Activated B cell treated with CpG ODN at 0.5 μM for 24 hours (primary cell): ENCODE measurements at regions of chr3 and their contacts with region 1.

Region 1: GRCh38 chr3:52705688-52706686 is at the starts of genes GLT8D1 and SPCS1:
- DNase-seq: peak; percentile 87
- ATAC-seq: peak; percentile 87
- H3K4me3 Mint-ChIP-seq: peak within 1 kb of the TSS; percentile 94
- H3K27ac Mint-ChIP-seq: peak within 1 kb of the TSS; percentile 92
- H3K4me1 Mint-ChIP-seq: peaks cover 48% of the 10 kb centered on the region
- H3K27me3 Mint-ChIP-seq: no peaks in the 10 kb centered on the region
- CTCF ChIP-seq: no peak
- total RNA-seq, gene GLT8D1: 20.4 and 22.2 TPM in 2 replicates
- total RNA-seq, gene SPCS1: 78.0 and 79.4 TPM in 2 replicates

Region 2: GRCh38 chr3:52663098-52663497 is 42.9 kb before region 1 on chr3:
- CTCF ChIA-PET with region 1: no interaction called
- POLR2A ChIA-PET with region 1: no interaction called
- intact Hi-C with region 1: no loop called
- DNase-seq: no peak
- ATAC-seq: no peak
- H3K4me3 Mint-ChIP-seq: no peak overlapping the region
- H3K27ac Mint-ChIP-seq: no peak overlapping the region
- H3K4me1 Mint-ChIP-seq: no peaks in the 10 kb centered on the region
- H3K27me3 Mint-ChIP-seq: no peaks in the 10 kb centered on the region
- CTCF ChIP-seq: no peak

Region 3: DNA sequence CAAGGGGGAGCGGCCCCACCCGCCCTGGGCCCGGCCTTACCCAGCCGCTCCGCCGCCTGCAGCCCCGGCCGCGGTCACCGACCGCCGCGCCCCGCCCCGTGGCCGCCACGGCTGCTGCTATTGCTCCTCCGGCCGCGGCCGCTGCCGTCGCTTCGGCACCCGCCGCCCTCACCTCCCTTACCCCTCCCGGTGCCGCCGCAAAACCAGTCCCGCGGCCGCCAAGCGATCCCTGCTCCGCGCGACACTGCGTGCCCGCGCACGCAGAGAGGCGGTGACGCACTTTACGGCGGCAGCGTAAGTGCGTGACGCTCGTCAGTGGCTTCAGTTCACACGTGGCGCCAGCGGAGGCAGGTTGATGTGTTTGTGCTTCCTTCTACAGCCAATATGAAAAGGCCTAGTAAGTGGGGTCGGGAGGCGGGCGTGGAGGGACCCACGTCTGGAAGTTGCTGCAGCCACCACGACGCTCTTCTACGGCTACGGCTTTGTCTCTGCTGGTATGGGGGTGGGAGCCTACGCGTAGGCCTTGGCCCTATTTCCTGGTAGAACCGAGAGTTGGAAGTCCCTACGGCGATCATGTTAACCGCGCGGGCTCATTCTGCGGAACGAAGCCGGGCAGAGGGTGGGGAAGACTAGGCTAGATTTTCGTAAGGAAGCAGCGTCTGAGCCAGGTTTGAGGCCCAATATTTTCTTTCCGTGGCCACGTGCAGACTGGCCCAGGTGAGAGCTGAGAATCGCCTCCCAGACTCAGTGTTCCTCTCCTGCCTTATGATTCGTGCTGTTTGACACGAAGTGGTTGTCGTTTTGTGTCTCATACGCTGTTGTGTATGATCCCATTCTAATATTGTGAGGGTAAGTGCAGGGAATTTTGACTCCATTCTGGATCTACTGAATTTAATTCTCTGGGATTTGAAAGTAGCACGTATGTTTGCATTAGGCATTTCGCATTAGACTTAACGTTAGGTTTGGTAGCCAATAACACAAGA is 20.0 kb before region 1 on chr3 and contains the starts of genes GNL3 and PBRM1:
- CTCF ChIA-PET with region 1: no interaction called
- POLR2A ChIA-PET with region 1: interaction called, 26 read pairs
- intact Hi-C with region 1: loop called (anchors 1 kb)
- DNase-seq: peak; percentile 92
- ATAC-seq: peak; percentile 89
- H3K4me3 Mint-ChIP-seq: peak within 1 kb of the TSS; percentile 96
- H3K27ac Mint-ChIP-seq: peak within 1 kb of the TSS; percentile 95
- H3K4me1 Mint-ChIP-seq: peaks cover 53% of the 10 kb centered on the region
- H3K27me3 Mint-ChIP-seq: no peaks in the 10 kb centered on the region
- CTCF ChIP-seq: no peak
- total RNA-seq, gene GNL3: 137 and 145 TPM in 2 replicates
- total RNA-seq, gene PBRM1: 60.0 and 62.1 TPM in 2 replicates

Region 4: DNA sequence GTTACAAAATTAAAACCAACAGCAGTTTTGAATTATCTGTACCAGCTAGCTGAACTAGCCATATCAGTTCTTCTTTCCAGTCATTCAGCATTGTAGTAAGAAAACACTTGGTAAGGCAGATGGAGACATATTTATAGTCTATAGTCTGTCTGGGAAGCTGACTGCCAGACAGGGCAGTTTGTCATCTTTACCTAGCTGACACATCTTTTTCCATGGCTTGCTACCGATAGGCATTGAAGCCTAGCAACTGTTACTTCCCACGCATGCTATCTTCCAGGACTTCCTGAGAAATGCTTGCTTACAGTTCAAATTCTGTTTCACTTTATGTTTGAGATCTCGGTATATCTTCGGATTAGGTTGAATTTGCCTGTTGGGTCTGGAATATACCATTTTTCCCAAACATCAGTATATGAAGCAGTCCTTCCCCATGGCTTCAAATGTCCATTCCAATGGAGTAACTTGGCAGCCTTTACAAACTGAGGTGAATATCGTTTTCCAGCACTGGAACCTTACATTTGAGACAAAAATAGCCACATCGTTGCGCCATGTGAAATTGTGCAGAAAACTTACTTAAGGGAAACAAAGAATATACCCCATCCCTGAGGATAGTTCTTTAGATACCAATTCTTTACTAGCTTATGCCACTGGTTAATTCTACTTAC is 11.3 kb before region 1 on chr3:
- CTCF ChIA-PET with region 1: no interaction called
- POLR2A ChIA-PET with region 1: interaction called, 12 read pairs
- intact Hi-C with region 1: no loop called
- DNase-seq: no peak
- ATAC-seq: no peak
- H3K4me3 Mint-ChIP-seq: no peak overlapping the region
- H3K27ac Mint-ChIP-seq: no peak overlapping the region
- H3K4me1 Mint-ChIP-seq: peaks cover 11% of the 10 kb centered on the region
- H3K27me3 Mint-ChIP-seq: no peaks in the 10 kb centered on the region
- CTCF ChIP-seq: no peak